Left ventricle myocardium inferior (tissue), 1 donor: ENCODE measurements at regions of chr7 and their contacts with region 1.

Region 1: GRCh38 chr7:31744294-31744874 is 57.4 kb downstream of the PPP1R17 start:
- DNase-seq: peak; percentile 29
- H3K4me3 ChIP-seq: no peak overlapping the region
- H3K27ac ChIP-seq: no peak overlapping the region
- H3K4me1 ChIP-seq: no peaks in the 10 kb centered on the region
- H3K27me3 ChIP-seq: no peaks in the 10 kb centered on the region
- CTCF ChIP-seq: peak; percentile 89

Region 2: DNA sequence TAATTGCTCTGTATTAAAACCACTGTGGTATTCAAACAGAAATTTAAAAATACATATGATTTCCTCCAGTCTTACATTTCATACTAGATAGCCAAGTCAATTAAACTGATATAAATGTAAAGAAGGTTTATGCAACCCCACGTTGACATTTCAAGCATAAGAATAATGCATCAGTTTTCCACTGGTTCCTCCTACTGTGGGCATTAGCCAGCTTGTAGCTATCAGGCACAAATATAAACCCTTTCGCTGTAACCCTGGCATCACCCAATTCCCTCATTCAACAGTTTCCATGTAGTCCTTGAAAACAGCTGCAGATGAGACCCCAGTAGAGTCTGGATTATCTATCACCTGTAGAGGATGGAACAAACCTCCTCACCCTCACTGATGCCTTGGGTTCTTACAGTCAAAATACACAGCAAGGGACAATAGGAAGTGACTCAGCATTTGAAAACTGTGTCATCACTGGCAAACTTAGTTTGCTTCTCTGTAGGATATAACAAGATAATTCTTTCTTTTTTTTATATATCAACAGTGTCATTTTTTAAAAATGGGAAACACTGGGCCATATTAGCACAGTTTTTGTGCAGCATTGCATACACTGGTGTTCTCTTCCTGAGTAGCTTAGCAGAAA is 212.8 kb after region 1 on chr7:
- intact Hi-C with region 1: no loop called
- DNase-seq: no peak
- H3K4me3 ChIP-seq: no peak overlapping the region
- H3K27ac ChIP-seq: peak overlapping the region; percentile 48
- H3K4me1 ChIP-seq: peaks cover 90% of the 10 kb centered on the region
- H3K27me3 ChIP-seq: no peaks in the 10 kb centered on the region
- CTCF ChIP-seq: no peak

Region 3: DNA sequence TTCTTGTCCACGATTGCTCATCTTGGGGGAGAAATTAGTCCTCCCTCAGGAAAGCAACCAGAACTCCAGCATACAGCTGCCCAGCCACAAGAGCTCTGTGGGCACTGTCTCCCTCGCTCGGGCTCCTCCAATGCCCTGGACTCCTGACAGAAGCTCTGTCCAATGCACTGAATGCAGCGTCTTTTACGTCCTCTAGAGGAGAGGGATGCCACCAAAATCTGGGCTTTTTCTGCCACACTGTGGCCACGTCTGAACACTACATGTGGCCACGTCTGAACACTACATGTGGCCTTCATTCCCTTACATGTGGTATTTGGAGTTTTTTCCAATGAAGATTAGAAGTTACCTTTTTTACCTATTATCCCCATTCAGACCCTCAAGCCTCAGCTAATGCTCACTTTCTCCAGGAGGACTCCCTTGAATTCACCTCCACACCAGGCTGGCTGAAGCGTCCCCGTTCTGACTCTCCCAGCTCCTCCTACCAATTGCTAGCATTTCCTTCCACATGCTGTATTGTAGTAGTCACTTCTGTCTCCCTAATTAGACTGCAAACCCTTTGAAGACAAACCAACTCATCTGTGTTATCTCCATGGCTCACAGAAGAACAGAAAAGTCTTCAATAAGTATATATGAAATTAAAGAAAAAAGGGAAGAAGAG is 460.1 kb after region 1 on chr7:
- intact Hi-C with region 1: loop called (anchors 2 kb)
- DNase-seq: peak; percentile 69
- H3K4me3 ChIP-seq: peak overlapping the region; percentile 55
- H3K27ac ChIP-seq: no peak overlapping the region
- H3K4me1 ChIP-seq: peaks cover 9% of the 10 kb centered on the region
- H3K27me3 ChIP-seq: peaks cover 10% of the 10 kb centered on the region
- CTCF ChIP-seq: peak; percentile 86